IMR-90 (cell line): ENCODE measurements at regions of chr3 and their contacts with region 1.

Region 1: DNA sequence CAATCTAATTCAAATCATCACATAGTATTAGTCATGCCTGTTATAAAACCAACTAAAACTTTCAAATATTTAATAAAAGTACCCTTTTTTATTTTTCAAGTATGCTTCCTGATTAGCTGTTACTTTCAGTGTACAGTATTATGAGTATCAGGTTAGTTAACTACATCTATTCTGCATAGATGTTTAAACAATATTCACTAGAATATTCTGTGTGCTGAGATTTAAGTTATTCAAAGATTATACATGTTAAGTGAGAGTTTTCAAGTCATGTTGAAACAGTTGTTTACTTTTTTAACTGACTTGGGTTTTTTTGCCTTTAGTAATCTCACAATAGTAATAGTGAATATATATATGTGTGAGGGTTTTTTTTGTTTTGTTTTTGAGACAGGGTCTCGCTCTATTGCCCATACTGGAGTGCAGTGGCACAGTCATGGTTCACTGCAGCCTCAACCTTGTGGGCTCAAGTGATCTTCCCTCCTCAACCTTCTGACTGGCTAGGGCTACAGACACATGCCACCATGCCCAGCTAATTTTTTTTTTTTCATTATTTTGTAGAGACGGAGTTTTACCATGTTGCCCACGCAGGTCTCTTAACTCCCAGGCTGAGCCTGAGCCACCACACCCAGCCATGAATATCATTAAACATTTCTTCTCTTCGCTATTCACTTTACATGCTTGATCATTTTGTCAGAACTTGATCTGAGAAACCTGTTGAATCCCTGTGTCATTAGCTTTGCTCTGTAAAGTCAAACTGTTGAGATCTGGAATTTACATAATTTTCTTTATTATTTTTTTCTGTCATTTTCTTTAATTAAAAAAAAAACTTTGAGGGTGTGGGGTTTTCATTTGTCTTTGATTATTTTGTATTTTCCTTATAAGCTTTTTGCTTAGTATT is 286.2 kb upstream of the UBE2E1 start:
- DNase-seq: no peak
- ATAC-seq: no peak
- H3K4me3 ChIP-seq: no peak overlapping the region
- H3K27ac ChIP-seq: no peak overlapping the region
- H3K4me1 ChIP-seq: peaks cover 2% of the 10 kb centered on the region; the same call in 1 of the 2 replicates
- H3K27me3 ChIP-seq: no peaks in the 10 kb centered on the region
- CTCF ChIP-seq: no peak
- POLR2A ChIP-seq: no peak
- RAD21 ChIP-seq: no peak

Region 2: GRCh38 chr3:22372292-22373062 is 1147.1 kb before region 1 on chr3:
- CTCF ChIA-PET with region 1: no interaction called
- POLR2A ChIA-PET with region 1: no interaction called
- dilution Hi-C with region 1: no loop called
- in situ Hi-C with region 1: no loop called
- intact Hi-C with region 1: loop called (anchors 10 kb)
- DNase-seq: no peak
- ATAC-seq: no peak
- H3K4me3 ChIP-seq: no peak overlapping the region
- H3K27ac ChIP-seq: no peak overlapping the region
- H3K4me1 ChIP-seq: no peaks in the 10 kb centered on the region
- H3K27me3 ChIP-seq: peaks cover 2% of the 10 kb centered on the region; the same call in 1 of the 2 replicates
- CTCF ChIP-seq: no peak
- POLR2A ChIP-seq: no peak
- RAD21 ChIP-seq: no peak